MCF 10A (cell line): ENCODE measurements at regions of chr7 and their contacts with region 1.

Region 1: DNA sequence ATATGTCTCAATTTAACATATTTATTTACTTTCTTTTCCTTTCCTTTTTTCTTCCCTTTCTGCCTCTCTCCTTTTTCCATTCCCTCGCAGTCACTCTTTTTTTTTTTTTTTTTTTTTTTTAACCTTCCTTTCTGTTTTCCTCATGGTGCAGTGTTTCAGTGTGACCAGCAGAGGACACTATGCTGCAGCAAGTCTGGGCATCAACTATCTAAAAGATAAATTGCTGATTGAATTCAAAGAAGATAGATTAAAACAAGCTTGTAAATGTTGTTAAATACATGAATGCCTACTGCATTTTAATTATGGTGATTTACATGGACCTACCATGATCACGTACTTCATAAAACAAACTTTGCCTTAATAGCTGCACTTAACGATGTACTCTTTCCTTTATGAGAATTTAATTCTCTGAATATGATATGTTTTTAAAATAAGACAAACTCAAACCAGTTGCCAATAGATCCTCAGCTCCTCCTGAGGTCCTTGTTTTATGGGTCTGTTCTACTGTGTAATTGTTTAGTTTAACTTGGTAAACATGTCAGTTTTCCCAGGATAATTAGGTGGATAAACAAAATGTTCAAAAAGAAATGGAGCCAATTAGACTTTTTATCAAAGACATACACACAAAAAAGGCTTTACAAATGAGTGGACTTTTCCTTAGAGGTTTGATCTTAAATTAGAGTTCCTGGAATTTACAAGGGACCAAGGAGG is 101.0 kb upstream of the AGR3 start:
- DNase-seq: peak; percentile 57
- H3K4me3 Mint-ChIP-seq: no peak overlapping the region
- H3K27ac Mint-ChIP-seq: no peak overlapping the region
- H3K4me1 Mint-ChIP-seq: peaks cover 26% of the 10 kb centered on the region
- H3K27me3 Mint-ChIP-seq: no peaks in the 10 kb centered on the region
- CTCF ChIP-seq: peak; percentile 79

Region 2: GRCh38 chr7:16926283-16926682 is 56.5 kb before region 1 on chr7:
- CTCF ChIA-PET with region 1: interaction called, 22 read pairs
- POLR2A ChIA-PET with region 1: no interaction called
- intact Hi-C with region 1: loop called (anchors 2 kb)
- DNase-seq: peak; percentile 63
- H3K4me3 Mint-ChIP-seq: no peak overlapping the region
- H3K27ac Mint-ChIP-seq: no peak overlapping the region
- H3K4me1 Mint-ChIP-seq: peaks cover 24% of the 10 kb centered on the region
- H3K27me3 Mint-ChIP-seq: no peaks in the 10 kb centered on the region
- CTCF ChIP-seq: peak; percentile 71

Region 3: DNA sequence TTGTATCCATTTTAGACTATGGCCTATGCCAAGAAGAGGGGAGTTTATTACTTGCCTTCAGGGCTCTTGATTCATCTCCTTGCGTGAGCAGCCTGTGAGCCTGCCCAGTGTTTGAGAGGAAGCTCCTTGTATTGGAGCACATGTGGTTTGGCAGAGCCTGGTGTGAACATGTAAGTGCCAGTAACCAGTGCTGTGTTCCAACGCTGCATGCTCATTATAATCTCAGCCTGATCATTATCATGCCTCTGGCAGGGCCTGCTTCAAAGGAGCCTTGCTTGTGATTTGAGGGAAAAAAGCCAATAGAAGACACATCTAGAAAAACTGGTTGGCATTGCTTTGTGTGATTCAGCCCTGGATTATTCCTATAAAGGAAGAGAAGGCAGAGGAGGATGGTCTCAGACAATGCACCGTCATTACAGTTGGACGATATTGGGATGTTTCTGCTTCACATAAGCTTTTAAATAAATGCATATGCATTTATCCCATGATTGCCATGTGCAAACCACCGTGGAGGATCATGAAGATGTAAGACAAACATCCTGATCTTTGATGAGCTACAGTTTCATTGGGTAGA is 112.3 kb after region 1 on chr7:
- CTCF ChIA-PET with region 1: interaction called, 11 read pairs
- POLR2A ChIA-PET with region 1: interaction called, 17 read pairs
- intact Hi-C with region 1: loop called (anchors 2 kb)
- DNase-seq: peak; percentile 99
- H3K4me3 Mint-ChIP-seq: no peak overlapping the region
- H3K27ac Mint-ChIP-seq: peak overlapping the region; percentile 87
- H3K4me1 Mint-ChIP-seq: peaks cover 49% of the 10 kb centered on the region
- H3K27me3 Mint-ChIP-seq: no peaks in the 10 kb centered on the region
- CTCF ChIP-seq: no peak

Region 4: GRCh38 chr7:17234398-17235031 is 251.7 kb after region 1 on chr7:
- CTCF ChIA-PET with region 1: interaction called, 4 read pairs
- POLR2A ChIA-PET with region 1: interaction called, 4 read pairs
- intact Hi-C with region 1: loop called (anchors 1 kb)
- DNase-seq: peak; percentile 92
- H3K4me3 Mint-ChIP-seq: peak overlapping the region; percentile 31
- H3K27ac Mint-ChIP-seq: peak overlapping the region; percentile 96
- H3K4me1 Mint-ChIP-seq: peaks cover 35% of the 10 kb centered on the region
- H3K27me3 Mint-ChIP-seq: no peaks in the 10 kb centered on the region
- CTCF ChIP-seq: no peak

Region 5: DNA sequence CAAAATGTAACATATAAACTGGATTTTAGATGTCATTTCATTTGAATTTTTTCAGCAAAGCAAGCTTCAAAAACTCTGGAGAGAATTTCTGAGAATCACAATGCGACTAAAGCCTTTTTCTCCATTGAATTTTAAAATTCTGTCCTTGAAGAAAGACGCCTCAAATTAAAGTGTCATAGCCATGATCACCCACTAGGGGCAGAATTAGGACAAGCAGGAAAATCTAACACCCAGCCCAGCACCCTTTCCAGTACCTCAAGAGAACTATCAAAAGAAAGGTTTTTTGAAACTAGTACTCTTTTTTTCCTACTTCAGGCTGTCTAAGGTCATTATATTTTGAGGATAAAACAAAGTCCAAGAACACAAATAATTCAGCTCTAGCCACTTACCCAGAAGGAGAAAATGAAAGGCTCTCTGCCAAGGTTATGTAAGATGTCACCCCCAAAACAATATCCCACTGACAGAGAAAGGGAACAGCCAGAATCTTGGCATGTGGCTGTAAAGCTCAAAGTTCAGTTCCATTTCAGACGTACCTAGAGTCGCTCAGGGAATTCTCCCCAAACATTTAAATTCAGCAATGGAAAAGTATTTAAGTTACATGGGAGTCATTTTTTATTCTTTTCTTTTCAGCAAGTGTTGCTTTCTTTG is 658.1 kb after region 1 on chr7:
- CTCF ChIA-PET with region 1: interaction called, 3 read pairs
- POLR2A ChIA-PET with region 1: no interaction called
- intact Hi-C with region 1: loop called (anchors 1 kb)
- DNase-seq: peak; percentile 66
- H3K4me3 Mint-ChIP-seq: no peak overlapping the region
- H3K27ac Mint-ChIP-seq: no peak overlapping the region
- H3K4me1 Mint-ChIP-seq: peaks cover 19% of the 10 kb centered on the region
- H3K27me3 Mint-ChIP-seq: no peaks in the 10 kb centered on the region
- CTCF ChIP-seq: peak; percentile 48